Left ventricle myocardium inferior (tissue), 1 donor: ENCODE measurements at regions of chr1 and their contacts with region 1.

Region 1: GRCh38 chr1:32939655-32940371 is 24.8 kb downstream of the RNF19B start:
- DNase-seq: peak; percentile 56
- H3K4me3 ChIP-seq: no peak overlapping the region
- H3K27ac ChIP-seq: peak overlapping the region; percentile 47
- H3K4me1 ChIP-seq: peaks cover 27% of the 10 kb centered on the region
- H3K27me3 ChIP-seq: no peaks in the 10 kb centered on the region
- CTCF ChIP-seq: no peak

Region 2: DNA sequence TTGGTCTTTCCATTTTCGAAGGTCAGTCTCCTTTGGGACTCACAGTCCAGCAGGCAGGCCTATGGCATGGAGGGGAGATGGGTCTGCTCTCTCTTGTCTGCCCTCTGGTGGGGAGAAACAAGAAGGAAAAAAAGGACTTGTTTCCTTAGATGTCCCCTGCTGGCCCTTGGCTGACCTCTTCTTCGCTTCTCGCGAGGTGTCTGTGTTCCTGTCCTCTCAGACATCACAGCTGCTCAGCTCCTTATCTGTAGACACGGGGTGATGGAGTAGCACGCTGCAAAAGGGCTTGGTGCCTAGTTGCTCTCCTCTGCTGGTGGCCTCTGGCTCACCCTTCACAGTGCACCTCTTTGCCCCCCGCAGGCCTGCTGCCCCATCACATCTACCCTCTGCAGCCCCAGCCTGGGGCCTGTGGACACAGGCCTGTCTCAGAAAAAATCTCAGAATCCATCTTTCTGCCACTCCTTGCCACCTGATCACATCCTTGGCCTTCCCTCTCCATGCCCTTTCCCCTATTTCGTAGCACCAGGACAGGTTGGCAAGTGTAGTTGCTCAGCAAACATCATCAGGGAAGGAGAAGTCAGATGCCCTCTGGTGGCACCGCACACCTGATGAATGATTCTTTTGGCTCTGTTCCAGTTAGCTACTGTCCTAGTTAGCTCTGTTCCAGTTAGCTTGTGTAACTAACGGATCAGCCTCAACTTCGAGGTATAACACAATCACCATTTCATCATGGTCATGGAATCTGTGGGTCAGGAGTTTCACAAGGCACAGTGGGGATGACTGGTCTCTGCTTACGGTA is 115.6 kb after region 1 on chr1:
- intact Hi-C with region 1: loop called (anchors 10 kb)
- DNase-seq: peak; percentile 87
- H3K4me3 ChIP-seq: no peak overlapping the region
- H3K27ac ChIP-seq: peak overlapping the region; percentile 79
- H3K4me1 ChIP-seq: peaks cover 15% of the 10 kb centered on the region
- H3K27me3 ChIP-seq: no peaks in the 10 kb centered on the region
- CTCF ChIP-seq: peak; percentile 80

Region 3: DNA sequence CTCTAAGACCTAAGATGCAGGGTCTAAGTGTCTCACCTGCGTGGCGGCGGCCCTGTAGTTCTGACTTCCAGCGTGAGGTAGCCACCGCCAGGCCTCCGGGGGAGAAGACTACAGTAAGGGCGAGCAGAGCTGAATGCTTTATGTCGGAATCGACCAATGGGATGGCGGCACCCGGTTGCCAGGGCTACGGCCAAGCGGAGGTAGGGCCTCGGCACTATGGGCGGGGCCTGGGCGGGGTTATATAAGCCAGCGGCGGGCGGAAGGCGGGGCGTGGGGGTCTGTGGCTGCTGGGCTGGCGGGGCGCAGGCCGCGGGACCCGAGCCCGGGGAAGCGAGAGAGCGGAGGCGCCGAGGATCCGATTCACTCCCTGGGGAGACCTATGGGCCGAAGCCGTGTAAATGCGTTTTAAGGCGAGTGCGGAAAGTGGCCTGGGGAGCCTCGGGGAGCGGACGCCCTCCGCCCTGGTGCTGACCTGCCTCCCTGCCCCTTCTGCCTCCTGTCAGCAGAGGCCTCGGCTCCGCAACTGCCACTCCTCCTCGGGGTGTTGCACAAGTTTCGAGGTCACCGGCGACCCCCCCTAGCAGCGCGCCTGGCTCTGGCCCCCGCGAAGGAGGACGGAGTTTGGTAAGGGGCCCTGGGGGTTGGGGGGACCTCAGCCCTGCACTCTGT is 141.2 kb after region 1 on chr1 and contains the start of gene AZIN2:
- intact Hi-C with region 1: loop called (anchors 10 kb)
- DNase-seq: peak; percentile 98
- H3K4me3 ChIP-seq: peak within 1 kb of the TSS; percentile 76
- H3K27ac ChIP-seq: peak within 1 kb of the TSS; percentile 58
- H3K4me1 ChIP-seq: peaks cover 21% of the 10 kb centered on the region
- H3K27me3 ChIP-seq: no peaks in the 10 kb centered on the region
- CTCF ChIP-seq: no peak
- total RNA-seq, gene AZIN2: 2.8 TPM